H1 (cell line): ENCODE measurements at regions of chr6 and their contacts with region 1.

Region 1: GRCh38 chr6:35248300-35248699 is 11.2 kb upstream of the ZNF76 start:
- DNase-seq: no peak
- H3K4me3 ChIP-seq: no peak overlapping the region
- H3K27ac ChIP-seq: no peak overlapping the region
- H3K4me1 ChIP-seq: peaks cover 0 to 7% (median 2%) of the 10 kb centered on the region in 4 experiments; a peak in 2 of 7 replicates
- H3K27me3 ChIP-seq: no peaks in the 10 kb centered on the region
- CTCF ChIP-seq: no peak
- EP300 ChIP-seq: no peak
- POLR2A ChIP-seq: no peak
- RAD21 ChIP-seq: no peak

Region 2: DNA sequence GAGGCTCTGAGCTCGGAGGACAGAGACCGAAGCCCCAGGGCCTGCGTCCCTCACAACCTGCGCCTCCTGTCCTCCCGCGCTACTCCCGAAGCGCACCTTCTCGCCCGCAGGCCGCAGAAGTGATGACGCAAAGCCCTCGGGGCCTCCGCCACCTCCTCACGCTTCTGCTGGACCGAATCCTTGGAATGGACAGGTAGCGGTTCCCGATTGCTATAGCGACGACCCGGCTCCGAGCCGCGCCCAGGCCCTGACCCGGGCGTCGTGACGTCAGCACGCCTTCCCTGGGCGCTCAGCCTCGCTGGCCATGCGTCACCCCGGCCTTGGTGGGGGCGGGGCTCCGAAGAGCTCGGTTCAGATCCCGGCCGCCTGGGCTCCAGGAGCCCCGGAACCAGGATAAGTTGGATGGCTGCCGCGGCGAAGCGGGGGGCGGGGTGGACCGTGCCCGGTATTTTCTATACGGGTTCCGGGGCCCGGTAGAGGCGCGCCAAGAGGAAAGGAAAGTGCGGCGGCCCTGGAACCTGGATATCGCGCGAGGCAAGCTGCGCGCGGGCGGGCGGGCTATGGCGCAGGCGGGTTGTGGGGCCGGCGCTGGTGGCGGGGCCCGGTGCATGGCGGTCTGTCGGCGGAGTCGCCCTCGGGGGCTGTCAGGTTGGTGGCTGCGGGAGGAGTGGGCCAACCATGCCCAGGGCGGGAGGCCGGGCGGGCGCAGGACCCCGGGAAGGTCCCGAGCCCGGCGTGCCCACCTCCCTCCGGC is 11.1 kb after region 1 on chr6 and contains the start of gene ZNF76:
- CTCF ChIA-PET with region 1: interaction called, 9 read pairs
- POLR2A ChIA-PET with region 1: interaction called, 14 read pairs
- DNase-seq: peak; percentile 94 to 100
- H3K4me3 ChIP-seq: peak within 1 kb of the TSS; percentile 61 to 89 (median 80)
- H3K27ac ChIP-seq: peak within 1 kb of the TSS; percentile 92
- H3K4me1 ChIP-seq: peaks cover 0 to 10% (median 0%) of the 10 kb centered on the region in 4 experiments; a peak in 4 of 7 replicates
- H3K27me3 ChIP-seq: no peaks in the 10 kb centered on the region
- CTCF ChIP-seq: no peak
- EP300 ChIP-seq: peak in 1 of 2 experiments; percentile 91; a peak in 2 of 3 replicates
- POLR2A ChIP-seq: peak in 1 of 2 experiments; percentile 96; a peak in 2 of 3 replicates
- RAD21 ChIP-seq: no peak
- total RNA-seq, gene ZNF76: 17.9 and 18.3 TPM in 2 replicates

Region 3: DNA sequence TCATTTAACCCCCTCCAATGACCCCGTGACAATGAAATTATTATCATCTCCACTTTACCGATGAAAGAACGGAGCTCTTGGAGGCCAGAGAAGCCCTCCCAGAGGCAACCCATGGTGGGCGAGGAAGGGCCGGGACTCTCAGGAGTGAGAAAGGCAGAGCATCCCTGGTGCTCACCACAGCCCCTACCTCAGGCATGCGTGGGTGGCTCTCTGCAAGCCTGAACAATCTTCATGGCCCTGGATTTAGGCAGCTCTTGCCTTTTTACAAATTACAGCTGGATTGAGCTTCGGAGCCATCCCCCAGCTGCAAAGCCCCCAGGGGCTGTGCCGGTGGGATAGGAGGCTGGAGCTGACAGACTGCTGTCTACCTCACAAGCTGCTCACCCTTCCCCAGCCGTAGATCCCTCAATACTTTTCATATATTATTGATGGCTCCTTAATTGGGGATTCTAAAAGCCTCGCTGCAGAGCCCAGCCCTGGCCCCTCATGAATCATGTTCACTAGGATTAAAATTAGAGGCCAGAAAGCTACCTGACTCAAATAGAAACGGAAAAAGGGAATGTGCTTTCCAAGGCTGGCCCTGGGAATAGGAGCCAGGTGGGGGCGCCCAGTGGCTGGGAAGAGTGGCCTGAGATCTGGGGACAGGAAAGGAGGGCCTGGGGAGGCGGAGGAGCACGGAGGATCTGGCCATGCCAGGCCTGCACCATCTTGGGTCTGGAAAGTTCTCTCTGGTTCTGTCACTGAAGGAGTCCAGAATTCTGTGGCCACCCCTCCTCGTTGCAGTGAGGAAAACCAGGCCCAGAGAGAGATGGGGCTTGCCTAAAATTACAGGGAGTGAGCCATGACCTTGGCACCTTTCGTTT is 1561.9 kb after region 1 on chr6:
- CTCF ChIA-PET with region 1: no interaction called
- POLR2A ChIA-PET with region 1: no interaction called
- DNase-seq: no peak
- H3K4me3 ChIP-seq: no peak overlapping the region
- H3K27ac ChIP-seq: no peak overlapping the region
- H3K4me1 ChIP-seq: peaks cover 1 to 11% (median 3%) of the 10 kb centered on the region in 4 experiments; a peak in 4 of 7 replicates
- H3K27me3 ChIP-seq: no peaks in the 10 kb centered on the region; a peak in 2 of 7 replicates
- CTCF ChIP-seq: peak; percentile 44 to 48 (median 44)
- EP300 ChIP-seq: no peak
- POLR2A ChIP-seq: no peak
- RAD21 ChIP-seq: peak; percentile 61 to 67